ENCODE measurements at regions of chr9 and their contacts with region 1.

Region 1: DNA sequence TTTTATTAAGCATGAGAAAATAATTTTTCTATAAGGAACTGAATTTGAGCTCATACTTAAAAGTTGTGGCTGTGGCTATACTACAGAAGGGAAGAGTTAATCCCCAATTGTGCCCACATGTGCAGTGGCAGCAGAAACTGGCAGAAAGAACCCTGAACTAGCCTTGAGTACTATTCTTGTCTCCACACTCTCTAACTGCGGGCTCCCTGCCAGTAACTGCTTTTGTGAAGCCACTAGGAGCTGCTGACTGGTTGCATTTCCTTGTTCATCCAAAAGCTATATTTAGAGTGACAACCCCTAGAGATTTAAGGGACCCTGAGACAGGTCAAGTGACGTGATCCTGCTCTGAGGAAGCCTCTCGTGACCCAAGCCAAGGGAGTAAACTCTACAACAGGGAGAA is 238.6 kb downstream of the ELAVL2 start:
- DNase-seq: no peak
- H3K4me3 ChIP-seq: no peak overlapping the region
- H3K27ac ChIP-seq: no peak overlapping the region
- H3K4me1 ChIP-seq: peaks cover 0 to 9% (median 2%) of the 10 kb centered on the region in 4 donors
- H3K27me3 ChIP-seq: no peaks in the 10 kb centered on the region
- CTCF ChIP-seq: no peak
- EP300 ChIP-seq: no peak
- POLR2A ChIP-seq: no peak

Region 2: GRCh38 chr9:23638837-23639426 is 51.5 kb after region 1 on chr9:
- in situ Hi-C with region 1: no loop called
- intact Hi-C with region 1: loop called (anchors 10 kb)
- DNase-seq: no peak
- H3K4me3 ChIP-seq: no peak overlapping the region
- H3K27ac ChIP-seq: no peak overlapping the region
- H3K4me1 ChIP-seq: no peaks in the 10 kb centered on the region
- H3K27me3 ChIP-seq: no peaks in the 10 kb centered on the region
- CTCF ChIP-seq: no peak
- EP300 ChIP-seq: no peak
- POLR2A ChIP-seq: no peak

Measured in transverse colon (tissue), 4 donors.